Heart left ventricle (tissue), 16 donors: ENCODE measurements at regions of chr14 and their contacts with region 1.

Region 1: GRCh38 chr14:91418387-91419043 is 895 bp upstream of the CCDC88C start:
- DNase-seq: peak; percentile 48 to 88 (median 61)
- ATAC-seq: peak; percentile 55 to 80 (median 76)
- H3K4me3 ChIP-seq: peak overlapping the region in 11 of 12 donors; percentile 3 to 85 (median 70)
- H3K27ac ChIP-seq: peak overlapping the region in 6 of 12 donors; percentile 11 to 58 (median 33)
- H3K4me1 ChIP-seq: peaks cover 0 to 37% (median 15%) of the 10 kb centered on the region in 12 donors
- H3K27me3 ChIP-seq: peaks cover 0 to 23% (median 4%) of the 10 kb centered on the region in 9 donors
- CTCF ChIP-seq: peak; percentile 89 to 99 (median 95)
- POLR2A ChIP-seq: no peak

Region 2: DNA sequence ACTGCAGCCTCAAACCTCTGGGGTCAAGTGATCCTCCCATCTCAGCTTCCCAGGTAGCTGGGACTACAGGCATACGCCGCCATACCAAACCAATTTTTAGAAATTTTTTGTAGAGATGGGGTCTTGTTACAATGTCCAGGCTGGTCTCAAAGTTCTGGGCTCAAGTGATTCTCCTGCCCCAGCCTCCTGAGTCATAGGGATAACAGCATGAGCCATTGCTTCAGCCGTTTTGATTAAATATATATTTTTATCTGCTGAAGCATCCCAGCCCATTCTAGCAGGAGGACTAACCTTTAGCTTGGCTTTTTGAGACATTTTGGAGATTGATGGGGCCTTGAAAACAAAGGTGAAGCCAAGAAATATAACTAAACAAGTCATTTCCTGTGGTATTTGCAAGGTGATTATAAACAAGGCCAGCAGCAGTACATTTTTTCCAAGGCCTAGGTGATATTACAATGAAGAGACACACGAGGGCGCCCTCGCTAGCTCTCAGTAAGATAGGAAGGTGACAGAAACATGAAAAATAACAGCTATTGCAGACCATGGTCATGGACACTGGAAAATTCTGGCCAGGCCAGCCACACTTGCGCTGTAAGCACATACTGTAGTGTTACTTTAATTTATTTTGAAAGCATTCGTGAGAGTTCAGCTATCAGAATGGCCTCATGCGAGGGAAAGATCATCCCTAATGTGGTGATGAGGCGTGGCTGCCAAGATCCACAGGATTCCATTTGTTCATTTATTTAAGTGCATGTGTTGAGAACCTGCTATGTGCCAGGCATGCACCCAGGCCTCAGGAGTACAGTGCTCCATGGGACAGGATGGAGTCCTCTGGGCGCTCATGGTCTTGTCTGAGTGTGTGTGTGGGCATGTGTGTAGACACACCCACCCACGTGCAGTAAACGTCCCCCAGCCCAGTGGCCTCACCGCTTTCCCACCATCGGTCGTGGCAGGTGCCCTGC is 241.2 kb before region 1 on chr14:
- intact Hi-C with region 1: loop called in 2 of 10 experiments (anchors 5 kb)
- DNase-seq: peak in 4 of 5 donors; percentile 32 to 49 (median 46)
- ATAC-seq: peak; percentile 31 to 67 (median 50)
- H3K4me3 ChIP-seq: no peak overlapping the region
- H3K27ac ChIP-seq: peak overlapping the region in 3 of 12 donors; percentile 12 to 37 (median 26)
- H3K4me1 ChIP-seq: peaks cover 0 to 14% (median 6%) of the 10 kb centered on the region in 12 donors
- H3K27me3 ChIP-seq: no peaks in the 10 kb centered on the region
- CTCF ChIP-seq: peak; percentile 58 to 80 (median 73)
- POLR2A ChIP-seq: no peak

Region 3: DNA sequence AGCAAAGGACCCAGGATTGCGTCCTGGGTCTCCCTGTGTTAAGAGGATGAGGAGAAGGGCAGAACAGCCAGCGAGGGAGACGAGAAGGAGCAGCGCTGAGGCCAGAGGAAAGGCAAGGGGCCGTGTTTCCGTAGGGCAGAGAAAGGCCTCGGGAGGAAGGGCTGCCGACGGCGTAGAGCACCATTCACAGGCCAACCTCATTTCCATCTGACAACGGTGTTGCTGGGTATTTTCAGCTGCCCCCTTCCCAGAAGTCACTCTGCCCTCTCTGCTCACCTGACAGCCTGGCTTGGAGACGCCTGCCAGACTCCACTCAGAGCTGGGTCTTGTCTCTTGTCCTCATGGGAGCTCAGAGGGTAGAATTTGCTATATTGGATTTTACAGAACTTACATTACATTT is 225.4 kb before region 1 on chr14:
- intact Hi-C with region 1: no loop called
- DNase-seq: no peak
- ATAC-seq: peak in 3 of 4 donors; percentile 58 to 68 (median 61)
- H3K4me3 ChIP-seq: no peak overlapping the region
- H3K27ac ChIP-seq: no peak overlapping the region
- H3K4me1 ChIP-seq: peaks cover 0 to 4% (median 0%) of the 10 kb centered on the region in 12 donors
- H3K27me3 ChIP-seq: no peaks in the 10 kb centered on the region
- CTCF ChIP-seq: no peak
- POLR2A ChIP-seq: no peak

Region 4: GRCh38 chr14:91323671-91324605 is 94.6 kb before region 1 on chr14:
- intact Hi-C with region 1: loop called (anchors 1 to 2 kb)
- DNase-seq: peak; percentile 86 to 92 (median 87)
- ATAC-seq: peak; percentile 77 to 93 (median 86)
- H3K4me3 ChIP-seq: peak overlapping the region in 11 of 12 donors; percentile 22 to 61 (median 49)
- H3K27ac ChIP-seq: peak overlapping the region; percentile 50 to 89 (median 76)
- H3K4me1 ChIP-seq: peaks cover 0 to 67% (median 51%) of the 10 kb centered on the region in 12 donors
- H3K27me3 ChIP-seq: no peaks in the 10 kb centered on the region
- CTCF ChIP-seq: peak; percentile 94 to 98 (median 96)
- POLR2A ChIP-seq: peak in 1 of 2 donors; percentile 21

Region 5: GRCh38 chr14:91367173-91368171 is 51.0 kb before region 1 on chr14:
- intact Hi-C with region 1: loop called in 3 of 10 experiments (anchors 5 to 10 kb)
- DNase-seq: no peak
- ATAC-seq: peak in 2 of 4 donors; percentile 11 to 39
- H3K4me3 ChIP-seq: peak overlapping the region in 1 of 12 donors; percentile 7
- H3K27ac ChIP-seq: peak overlapping the region in 8 of 12 donors; percentile 2 to 63 (median 26)
- H3K4me1 ChIP-seq: peaks cover 0 to 87% (median 25%) of the 10 kb centered on the region in 12 donors
- H3K27me3 ChIP-seq: peaks cover 0 to 7% (median 0%) of the 10 kb centered on the region in 9 donors
- CTCF ChIP-seq: no peak
- POLR2A ChIP-seq: no peak

Region 6: DNA sequence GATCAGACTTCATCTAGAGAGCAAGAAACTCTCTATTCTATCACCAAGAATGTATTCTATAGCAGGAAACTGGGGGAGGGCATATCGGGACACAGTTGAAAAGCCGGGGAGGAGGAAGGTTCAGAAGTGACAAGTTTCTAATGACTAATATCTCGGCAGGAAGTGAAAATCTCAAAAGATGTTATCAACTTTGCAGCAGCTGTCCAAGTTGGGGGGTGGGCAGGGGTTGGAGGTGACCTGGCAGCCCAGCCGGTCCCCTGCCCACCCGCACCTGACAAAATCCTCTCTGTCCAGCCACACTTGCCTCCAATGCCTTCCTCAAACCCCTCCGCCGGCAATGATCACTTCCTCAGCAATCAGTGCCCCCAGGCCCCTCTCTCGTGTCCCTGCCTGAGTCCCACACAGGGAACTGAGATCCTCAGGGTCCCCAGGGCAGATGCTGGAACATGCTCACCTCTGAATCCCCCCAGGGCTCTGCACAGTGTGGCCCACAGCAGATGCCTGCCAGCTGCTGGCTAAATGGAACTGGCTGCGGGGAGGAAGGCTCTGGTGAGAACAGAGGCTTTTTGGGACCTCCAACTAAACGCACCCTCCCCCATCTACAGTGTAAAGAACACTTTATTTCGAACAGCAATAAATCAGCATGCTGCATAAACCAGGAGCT is 44.8 kb before region 1 on chr14:
- intact Hi-C with region 1: loop called in 3 of 10 experiments (anchors 5 to 10 kb)
- DNase-seq: peak in 1 of 5 donors; percentile 53
- ATAC-seq: peak in 1 of 4 donors; percentile 37
- H3K4me3 ChIP-seq: peak overlapping the region in 1 of 12 donors; percentile 25
- H3K27ac ChIP-seq: peak overlapping the region in 4 of 12 donors; percentile 15 to 79 (median 38)
- H3K4me1 ChIP-seq: peaks cover 0 to 99% (median 46%) of the 10 kb centered on the region in 12 donors
- H3K27me3 ChIP-seq: peaks cover 0 to 9% (median 0%) of the 10 kb centered on the region in 9 donors
- CTCF ChIP-seq: no peak
- POLR2A ChIP-seq: no peak

Region 7: GRCh38 chr14:91380610-91381371 is 37.7 kb before region 1 on chr14:
- intact Hi-C with region 1: loop called in 1 of 10 experiments (anchors 5 kb)
- DNase-seq: peak in 4 of 5 donors; percentile 14 to 70 (median 58)
- ATAC-seq: peak in 3 of 4 donors; percentile 41 to 58 (median 52)
- H3K4me3 ChIP-seq: no peak overlapping the region
- H3K27ac ChIP-seq: no peak overlapping the region
- H3K4me1 ChIP-seq: peaks cover 0 to 73% (median 13%) of the 10 kb centered on the region in 12 donors
- H3K27me3 ChIP-seq: no peaks in the 10 kb centered on the region
- CTCF ChIP-seq: no peak
- POLR2A ChIP-seq: no peak